ENCODE measurements at regions of chr1 and their contacts with region 1.

Region 1: DNA sequence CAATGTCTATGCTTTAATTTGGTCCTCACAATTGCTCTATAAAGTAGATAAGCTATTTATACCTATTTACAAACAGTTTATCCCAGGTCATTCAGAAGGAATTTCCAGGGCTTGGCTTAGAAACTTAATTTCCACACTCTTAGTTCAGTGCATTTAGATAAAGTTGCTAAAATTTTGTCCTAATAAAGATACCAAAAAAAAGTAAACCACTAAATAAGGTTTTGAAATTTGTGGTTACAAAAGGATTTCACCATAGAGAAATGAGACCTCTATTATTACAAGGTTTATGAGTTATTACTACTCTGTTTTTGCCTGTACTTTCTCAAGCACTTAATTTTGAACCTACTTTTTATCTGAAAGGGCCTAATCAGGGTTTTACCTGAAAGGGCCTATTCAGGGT is 22.5 kb downstream of the PTPN22 start:
- DNase-seq: no peak
- ATAC-seq: no peak
- H3K4me3 Mint-ChIP-seq: no peak overlapping the region
- H3K27ac Mint-ChIP-seq: no peak overlapping the region
- H3K4me1 Mint-ChIP-seq: peaks cover 23% of the 10 kb centered on the region
- H3K27me3 Mint-ChIP-seq: no peaks in the 10 kb centered on the region

Region 2: DNA sequence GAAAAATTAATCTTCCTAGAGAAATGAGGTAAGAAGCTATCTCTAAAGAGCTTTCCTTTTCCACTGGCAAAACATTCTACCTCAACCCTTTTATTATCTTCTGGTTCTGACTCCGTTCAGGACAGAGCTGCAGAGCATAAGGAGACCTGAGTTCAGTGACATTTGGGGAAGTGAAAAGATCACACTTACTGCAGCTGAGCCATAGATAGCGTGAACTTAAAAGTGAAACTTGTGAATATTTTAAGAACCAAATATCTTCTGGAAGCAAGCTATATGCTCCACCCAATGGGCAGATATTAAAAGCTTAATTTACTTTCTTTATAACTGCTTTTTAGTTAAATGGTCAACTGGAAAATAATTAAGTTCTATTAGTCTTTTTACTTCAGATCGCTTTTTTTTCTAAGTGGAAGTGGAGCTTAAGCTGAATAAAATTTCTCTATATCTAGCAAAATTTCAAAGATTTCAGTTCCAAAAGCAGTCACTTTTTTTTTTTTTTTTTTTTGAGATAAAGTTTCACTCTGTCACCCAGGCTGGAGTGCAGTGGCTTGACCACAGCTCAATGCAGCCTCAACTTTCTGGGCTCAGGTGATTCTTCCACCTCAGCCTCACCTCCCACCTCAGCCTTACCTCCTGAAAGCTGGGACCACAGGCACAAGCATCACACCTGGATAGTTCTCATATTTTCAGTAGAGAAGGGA is 10.6 kb after region 1 on chr1:
- CTCF ChIA-PET with region 1: interaction called, 11 read pairs
- POLR2A ChIA-PET with region 1: interaction called, 3 read pairs
- DNase-seq: no peak
- ATAC-seq: peak; percentile 45
- H3K4me3 Mint-ChIP-seq: no peak overlapping the region
- H3K27ac Mint-ChIP-seq: peak overlapping the region; percentile 53
- H3K4me1 Mint-ChIP-seq: peaks cover 41% of the 10 kb centered on the region
- H3K27me3 Mint-ChIP-seq: no peaks in the 10 kb centered on the region

Measured in activated CD8-positive, alpha-beta T cell treated with anti-CD3 and anti-CD28 coated beads, Interleukin-2, amount 10 ng/mL, durations not matched to agents 7 days and 5 days (primary cell).